HepG2 (cell line): ENCODE measurements at regions of chrX and their contacts with region 1.

Region 1: DNA sequence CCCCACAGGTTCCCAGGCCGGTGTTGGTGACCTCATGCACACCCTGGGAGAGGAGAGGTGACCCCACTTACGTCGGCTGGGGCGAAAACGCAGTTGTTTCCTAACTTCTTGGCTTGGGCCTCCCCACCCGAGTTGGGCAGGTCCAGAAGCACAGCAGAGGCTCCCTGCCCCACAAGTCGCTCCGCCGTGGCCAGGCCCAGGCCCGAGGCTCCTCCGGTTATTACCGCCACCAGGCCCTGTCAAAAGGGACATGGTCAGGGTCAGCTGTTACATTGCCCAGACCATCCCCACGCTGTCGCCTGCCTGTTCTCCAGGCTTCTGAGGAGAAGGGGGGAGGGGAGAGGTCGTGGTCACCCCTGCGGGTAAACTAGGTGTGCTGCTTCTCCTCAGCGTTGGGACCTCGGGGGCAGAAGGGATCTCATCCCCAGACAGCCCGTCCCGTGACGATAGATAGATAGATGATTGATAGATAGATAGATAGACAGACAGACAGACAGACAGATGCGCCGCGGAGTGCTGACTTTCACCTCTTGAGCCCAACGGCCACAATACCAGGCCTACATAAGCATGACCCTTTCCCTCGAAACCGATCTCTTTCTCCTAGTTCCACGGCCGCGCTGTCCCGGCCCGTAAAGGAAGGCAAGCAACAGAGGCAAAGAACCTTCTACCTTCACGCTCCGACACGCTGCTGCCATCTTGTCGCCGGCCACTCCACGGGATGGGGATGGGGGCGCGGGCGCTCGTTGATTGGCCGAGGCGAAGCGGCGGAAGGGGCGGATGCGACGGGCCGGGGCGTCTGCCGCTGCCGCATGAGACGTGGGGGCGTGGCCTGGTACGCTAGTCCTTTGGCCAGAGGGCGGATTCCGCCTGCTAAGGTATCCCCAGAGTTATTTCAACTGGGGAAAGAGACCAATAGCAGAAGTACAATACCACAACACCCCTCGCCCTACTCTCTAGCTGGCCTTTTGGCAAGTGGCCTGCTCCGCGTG is at the start of gene HSD17B10:
- DNase-seq: peak; percentile 69
- ATAC-seq: peak; percentile 98
- H3K4me3 ChIP-seq: peak within 1 kb of the TSS; percentile 67 to 87 (median 78)
- H3K27ac ChIP-seq: peak within 1 kb of the TSS; percentile 44
- H3K4me1 ChIP-seq: peaks cover 5% of the 10 kb centered on the region
- H3K27me3 ChIP-seq: no peaks in the 10 kb centered on the region; a peak in 1 of 5 replicates
- CTCF ChIP-seq: peak; percentile 7; the same call in 1 of the 2 replicates
- EP300 ChIP-seq: no peak
- POLR2A ChIP-seq: peak; percentile 43 to 79; a peak in 2 of 4 replicates
- RAD21 ChIP-seq: no peak
- total RNA-seq, gene HSD17B10: 84.7 and 98.9 TPM in 2 replicates

Region 2: GRCh38 chrX:53452812-53453211 is 18.9 kb after region 1 on chrX:
- CTCF ChIA-PET with region 1: no interaction called
- POLR2A ChIA-PET with region 1: no interaction called
- in situ Hi-C with region 1: no loop called
- intact Hi-C with region 1: no loop called
- DNase-seq: no peak
- ATAC-seq: no peak
- H3K4me3 ChIP-seq: no peak overlapping the region
- H3K27ac ChIP-seq: no peak overlapping the region
- H3K4me1 ChIP-seq: no peaks in the 10 kb centered on the region
- H3K27me3 ChIP-seq: no peaks in the 10 kb centered on the region
- CTCF ChIP-seq: no peak
- EP300 ChIP-seq: no peak
- POLR2A ChIP-seq: no peak
- RAD21 ChIP-seq: no peak

Region 3: DNA sequence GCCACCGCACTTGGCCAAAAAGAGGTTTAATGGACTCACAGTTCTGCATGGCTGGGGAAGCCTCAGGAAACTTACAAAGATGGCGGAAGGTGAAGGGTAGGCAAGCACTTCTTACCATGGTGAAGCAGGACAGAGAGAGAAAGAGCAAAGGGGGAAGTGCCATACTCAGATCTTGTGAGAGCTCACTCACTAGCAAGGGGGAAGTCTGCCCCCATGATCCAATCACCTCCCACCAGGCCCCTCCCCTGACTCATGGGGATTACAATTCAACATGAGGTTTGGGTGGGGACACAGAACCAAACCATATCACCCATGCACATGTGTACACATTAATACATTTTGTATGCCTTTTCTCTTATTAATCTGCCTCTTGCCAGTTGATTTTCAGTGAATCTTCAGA is 77.4 kb after region 1 on chrX:
- CTCF ChIA-PET with region 1: no interaction called
- POLR2A ChIA-PET with region 1: no interaction called
- in situ Hi-C with region 1: no loop called
- intact Hi-C with region 1: loop called (anchors 2 kb)
- DNase-seq: no peak
- ATAC-seq: no peak
- H3K4me3 ChIP-seq: no peak overlapping the region
- H3K27ac ChIP-seq: no peak overlapping the region
- H3K4me1 ChIP-seq: no peaks in the 10 kb centered on the region
- H3K27me3 ChIP-seq: no peaks in the 10 kb centered on the region
- CTCF ChIP-seq: no peak
- EP300 ChIP-seq: no peak
- POLR2A ChIP-seq: no peak
- RAD21 ChIP-seq: no peak